SK-N-SH (cell line): ENCODE measurements at regions of chr14 and their contacts with region 1.

Region 1: DNA sequence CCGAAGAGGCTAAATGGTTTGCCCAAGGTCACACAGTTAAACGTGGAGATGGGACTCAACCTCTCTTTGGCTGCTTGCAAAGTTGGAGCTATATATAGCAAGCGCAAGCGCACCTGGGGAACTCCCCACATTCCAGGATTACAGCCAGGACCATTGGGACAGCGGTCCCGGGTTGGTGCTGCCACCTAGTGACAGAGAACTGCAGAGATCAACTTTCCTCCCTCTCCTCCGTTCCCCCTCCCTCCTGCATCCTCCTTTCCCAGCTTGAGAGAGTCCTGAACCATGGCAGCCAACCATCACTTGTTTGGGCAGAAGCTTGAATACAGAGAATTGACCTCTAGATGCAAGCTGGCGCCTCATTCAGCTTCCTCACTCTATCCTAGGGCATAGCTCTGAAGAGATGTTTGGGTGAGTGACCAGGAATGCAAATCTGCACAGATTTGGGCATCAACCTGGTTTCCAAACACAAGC is 17.4 kb upstream of the FLVCR2 start:
- DNase-seq: peak; percentile 86
- H3K4me3 ChIP-seq: no peak overlapping the region; a peak in 1 of 4 replicates
- H3K27ac ChIP-seq: no peak overlapping the region
- H3K4me1 ChIP-seq: peaks cover 0 to 8% of the 10 kb centered on the region in 2 experiments; a peak in 1 of 4 replicates
- H3K27me3 ChIP-seq: peaks cover 12% of the 10 kb centered on the region; the same call in 1 of the 2 replicates
- CTCF ChIP-seq: peak; percentile 85
- EP300 ChIP-seq: no peak
- RAD21 ChIP-seq: peak; percentile 85

Region 2: GRCh38 chr14:75307700-75308379 is 253.2 kb before region 1 on chr14:
- CTCF ChIA-PET with region 1: interaction called, 63 read pairs
- POLR2A ChIA-PET with region 1: no interaction called
- DNase-seq: peak; percentile 70
- H3K4me3 ChIP-seq: peak overlapping the region in 1 of 2 experiments; percentile 46; a peak in 1 of 4 replicates
- H3K27ac ChIP-seq: no peak overlapping the region
- H3K4me1 ChIP-seq: peaks cover 6 to 14% of the 10 kb centered on the region in 2 experiments; a peak in 2 of 4 replicates
- H3K27me3 ChIP-seq: no peaks in the 10 kb centered on the region
- CTCF ChIP-seq: peak; percentile 95
- EP300 ChIP-seq: no peak
- RAD21 ChIP-seq: peak; percentile 97

Region 3: DNA sequence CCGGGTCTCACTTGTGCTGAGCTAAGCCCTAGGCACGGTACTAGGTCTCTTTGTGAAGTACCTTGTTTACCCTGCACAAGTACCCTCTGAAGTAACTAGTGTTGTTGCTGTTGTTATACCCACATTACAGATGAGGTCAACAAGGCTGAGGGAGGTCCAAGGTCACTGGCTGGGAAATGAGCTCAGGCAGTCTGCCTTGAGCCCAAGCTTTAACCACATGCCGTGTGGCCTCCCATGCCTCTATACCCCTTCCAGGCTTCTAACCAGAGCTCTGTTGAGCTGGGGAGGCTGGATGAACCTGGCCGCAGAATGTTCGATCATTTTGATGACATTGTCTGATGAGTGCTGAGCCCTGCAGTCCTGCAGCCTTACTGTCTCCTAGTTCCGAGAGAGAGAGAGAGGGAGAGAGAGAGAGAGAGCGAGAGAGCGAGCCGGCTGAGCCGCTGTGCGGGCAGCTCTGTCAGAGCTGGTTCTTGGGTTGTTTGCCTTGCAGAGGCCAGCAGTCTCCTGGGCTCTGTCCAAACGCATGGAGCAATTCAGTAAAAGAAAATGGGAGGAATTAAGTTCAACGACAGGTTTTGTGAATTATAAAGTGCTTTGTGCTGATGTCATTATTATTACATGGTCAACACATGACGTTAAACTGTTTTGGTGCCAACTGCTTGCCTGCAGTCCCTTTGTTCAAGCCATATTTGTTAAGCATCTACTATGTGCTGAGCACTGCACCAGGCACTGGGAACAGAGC is 120.1 kb before region 1 on chr14:
- CTCF ChIA-PET with region 1: interaction called, 10 read pairs
- POLR2A ChIA-PET with region 1: no interaction called
- DNase-seq: no peak
- H3K4me3 ChIP-seq: no peak overlapping the region
- H3K27ac ChIP-seq: no peak overlapping the region
- H3K4me1 ChIP-seq: peaks cover 0 to 28% of the 10 kb centered on the region in 2 experiments; a peak in 1 of 4 replicates
- H3K27me3 ChIP-seq: no peaks in the 10 kb centered on the region
- CTCF ChIP-seq: no peak
- EP300 ChIP-seq: no peak
- RAD21 ChIP-seq: no peak

Region 4: GRCh38 chr14:75514673-75515628 is 46.0 kb before region 1 on chr14:
- CTCF ChIA-PET with region 1: interaction called, 10 read pairs
- POLR2A ChIA-PET with region 1: no interaction called
- DNase-seq: no peak
- H3K4me3 ChIP-seq: no peak overlapping the region
- H3K27ac ChIP-seq: no peak overlapping the region
- H3K4me1 ChIP-seq: peaks cover 0 to 3% of the 10 kb centered on the region in 2 experiments; a peak in 1 of 4 replicates
- H3K27me3 ChIP-seq: 0 out of 2 replicates have a peak, but pooled peaks cover 8% of the 10 kb centered on the region
- CTCF ChIP-seq: peak; percentile 18
- EP300 ChIP-seq: no peak
- RAD21 ChIP-seq: no peak

Region 5: DNA sequence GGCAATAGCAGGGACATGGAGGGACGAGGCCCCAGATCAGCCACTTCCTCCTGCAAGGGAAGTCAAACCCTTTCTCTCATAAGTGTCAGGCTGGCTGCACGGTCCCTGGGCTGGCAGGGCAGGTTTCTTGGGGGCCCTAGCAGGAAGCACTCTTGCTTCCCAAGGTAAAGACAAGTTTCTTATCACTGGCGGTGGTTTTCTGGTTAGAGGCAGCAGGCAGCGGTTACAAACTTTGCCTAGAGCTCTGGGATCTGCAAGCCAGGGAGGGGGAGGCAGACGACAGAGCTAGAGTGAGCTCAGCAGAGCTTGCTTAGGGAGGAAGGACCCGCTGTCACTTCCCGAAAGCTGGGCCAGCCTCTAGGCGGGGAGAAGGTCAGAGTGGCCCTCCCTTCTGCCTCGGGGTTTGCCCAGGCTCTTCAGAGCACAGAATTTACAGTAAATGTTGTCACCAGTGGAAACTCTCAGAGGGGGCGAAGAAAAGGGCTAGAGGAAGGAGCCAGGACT is 18.4 kb before region 1 on chr14:
- CTCF ChIA-PET with region 1: interaction called, 15 read pairs
- POLR2A ChIA-PET with region 1: no interaction called
- DNase-seq: no peak
- H3K4me3 ChIP-seq: no peak overlapping the region
- H3K27ac ChIP-seq: no peak overlapping the region
- H3K4me1 ChIP-seq: no peaks in the 10 kb centered on the region
- H3K27me3 ChIP-seq: no peaks in the 10 kb centered on the region
- CTCF ChIP-seq: no peak
- EP300 ChIP-seq: no peak
- RAD21 ChIP-seq: no peak

Region 6: DNA sequence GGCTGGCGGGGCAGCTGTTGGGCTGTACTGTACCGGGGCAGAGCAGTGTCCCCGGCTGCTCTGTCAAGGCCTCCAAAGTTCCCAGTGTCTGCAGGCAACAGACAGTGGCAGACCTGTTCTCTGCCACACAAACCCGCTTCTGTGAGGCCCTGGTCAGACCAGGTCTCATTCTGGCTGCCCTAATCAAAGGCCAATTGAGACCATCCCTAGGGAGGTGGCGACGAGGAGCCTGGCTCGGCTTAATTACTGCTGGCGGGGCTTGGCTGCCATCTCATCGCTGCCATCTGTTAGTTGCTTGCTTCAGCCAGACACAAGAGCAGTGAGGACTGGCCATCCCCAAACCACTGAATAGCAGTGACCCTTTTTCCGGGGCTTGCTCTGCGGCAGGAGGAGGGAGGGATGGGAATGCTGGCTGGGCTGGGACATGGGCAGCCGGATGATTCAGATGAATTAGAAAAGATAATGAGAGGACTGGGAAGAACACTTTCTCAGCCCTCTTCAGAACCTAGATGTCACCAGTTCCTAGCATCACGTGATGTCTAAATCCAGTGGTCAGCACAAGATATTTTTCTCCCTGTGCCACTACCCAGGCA is 75.2 kb after region 1 on chr14:
- CTCF ChIA-PET with region 1: interaction called, 20 read pairs
- POLR2A ChIA-PET with region 1: no interaction called
- DNase-seq: peak; percentile 77
- H3K4me3 ChIP-seq: no peak overlapping the region
- H3K27ac ChIP-seq: peak overlapping the region in 1 of 2 experiments; percentile 94; a peak in 2 of 4 replicates
- H3K4me1 ChIP-seq: peaks cover 0 to 16% of the 10 kb centered on the region in 2 experiments; a peak in 2 of 4 replicates
- H3K27me3 ChIP-seq: peaks cover 4% of the 10 kb centered on the region; the same call in 1 of the 2 replicates
- CTCF ChIP-seq: no peak
- EP300 ChIP-seq: peak in 1 of 2 experiments; percentile 79; a peak in 2 of 4 replicates
- RAD21 ChIP-seq: no peak